Activated B cell treated with CpG ODN at 0.5 μM for 24 hours (primary cell): ENCODE measurements at regions of chr18 and their contacts with region 1.

Region 1: DNA sequence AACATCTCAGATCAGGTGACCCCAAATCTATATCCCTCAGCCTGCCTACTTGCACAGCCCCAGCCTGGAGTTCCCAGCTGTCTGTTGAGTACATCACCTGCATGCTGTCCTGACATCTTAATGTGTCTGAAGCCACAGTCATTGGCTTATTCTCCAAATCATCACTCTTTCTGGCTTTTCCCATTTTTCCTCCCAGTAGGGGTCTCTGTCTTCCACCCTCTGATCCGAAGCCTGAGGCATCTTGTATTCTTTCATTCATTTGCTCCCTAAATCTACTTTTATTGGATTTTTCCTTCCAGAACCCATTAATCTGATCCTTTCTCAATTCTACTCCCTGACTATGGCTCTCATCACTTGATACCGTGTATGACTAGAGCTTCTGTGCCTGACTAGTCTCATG is 332.9 kb upstream of the DCC start:
- DNase-seq: no peak
- ATAC-seq: no peak
- H3K4me3 Mint-ChIP-seq: no peak overlapping the region
- H3K27ac Mint-ChIP-seq: no peak overlapping the region
- H3K4me1 Mint-ChIP-seq: peaks cover 9% of the 10 kb centered on the region
- H3K27me3 Mint-ChIP-seq: no peaks in the 10 kb centered on the region
- CTCF ChIP-seq: no peak

Region 2: DNA sequence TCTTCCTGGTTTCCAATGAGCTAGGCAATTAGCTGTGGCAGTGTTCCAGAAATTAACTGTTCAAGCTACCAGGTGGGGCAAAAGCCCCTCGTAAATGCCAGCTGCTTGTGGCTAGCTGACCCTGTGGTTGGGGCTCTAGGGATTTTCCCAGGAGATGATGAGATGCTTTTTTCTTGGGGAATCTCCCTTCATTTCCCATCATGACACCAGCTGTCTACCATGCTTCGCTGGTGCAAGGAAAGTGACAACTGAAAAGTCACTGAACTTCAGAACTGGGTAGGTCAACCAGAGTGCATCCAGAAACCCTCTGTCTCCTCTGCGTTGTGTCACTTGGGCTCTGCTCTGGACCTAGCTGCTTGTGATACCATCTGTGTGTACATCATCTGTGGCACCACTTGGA is 53.6 kb before region 1 on chr18:
- CTCF ChIA-PET with region 1: no interaction called
- POLR2A ChIA-PET with region 1: no interaction called
- intact Hi-C with region 1: loop called (anchors 10 kb)
- DNase-seq: no peak
- ATAC-seq: peak; percentile 42
- H3K4me3 Mint-ChIP-seq: no peak overlapping the region
- H3K27ac Mint-ChIP-seq: no peak overlapping the region
- H3K4me1 Mint-ChIP-seq: peaks cover 1% of the 10 kb centered on the region
- H3K27me3 Mint-ChIP-seq: no peaks in the 10 kb centered on the region
- CTCF ChIP-seq: no peak

Region 3: GRCh38 chr18:52060607-52061304 is 53.6 kb after region 1 on chr18:
- CTCF ChIA-PET with region 1: no interaction called
- POLR2A ChIA-PET with region 1: no interaction called
- intact Hi-C with region 1: loop called (anchors 10 kb)
- DNase-seq: no peak
- ATAC-seq: no peak
- H3K4me3 Mint-ChIP-seq: no peak overlapping the region
- H3K27ac Mint-ChIP-seq: no peak overlapping the region
- H3K4me1 Mint-ChIP-seq: no peaks in the 10 kb centered on the region
- H3K27me3 Mint-ChIP-seq: no peaks in the 10 kb centered on the region
- CTCF ChIP-seq: no peak